ENCODE measurements at regions of chr12 and their contacts with region 1.

Region 1: DNA sequence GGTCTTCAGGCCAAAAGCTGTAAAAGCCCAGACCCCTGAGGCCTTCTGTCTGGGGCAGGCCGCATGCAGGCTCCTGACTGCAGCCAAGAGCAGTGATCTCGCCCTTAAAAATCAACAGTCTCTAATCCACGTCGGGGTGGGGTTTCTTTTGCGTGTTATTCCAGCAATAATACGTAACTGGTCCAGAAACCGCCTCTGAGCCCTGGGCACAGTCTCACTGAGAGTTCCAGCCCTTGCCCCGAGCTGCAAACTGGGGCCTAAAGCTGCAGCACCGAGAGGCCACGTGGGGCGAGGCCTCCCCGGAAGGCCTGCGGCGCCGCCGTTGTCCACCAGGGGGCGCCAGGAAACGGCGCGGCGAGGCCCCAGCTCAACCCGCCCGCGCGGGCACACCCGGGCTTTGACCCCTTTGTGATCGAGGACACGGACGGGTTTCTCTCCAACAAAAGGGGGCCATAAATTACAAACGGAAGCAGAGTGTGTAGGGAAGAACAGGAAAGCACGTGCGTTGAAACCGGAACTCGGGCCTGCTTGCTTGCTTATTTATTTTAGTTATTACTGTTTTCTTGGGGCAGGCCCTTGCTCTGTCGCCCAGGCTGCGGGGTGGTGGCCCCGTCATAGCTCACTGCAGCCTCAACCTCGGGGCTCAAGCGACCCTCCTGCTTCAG is 87.2 kb downstream of the NINJ2 start:
- DNase-seq: peak; percentile 35 to 96 (median 73)

Region 2: GRCh38 chr12:480831-481816 is 95.0 kb before region 1 on chr12:
- intact Hi-C with region 1: no loop called
- DNase-seq: peak in 7 of 10 donors; percentile 19 to 89 (median 46)

Region 3: DNA sequence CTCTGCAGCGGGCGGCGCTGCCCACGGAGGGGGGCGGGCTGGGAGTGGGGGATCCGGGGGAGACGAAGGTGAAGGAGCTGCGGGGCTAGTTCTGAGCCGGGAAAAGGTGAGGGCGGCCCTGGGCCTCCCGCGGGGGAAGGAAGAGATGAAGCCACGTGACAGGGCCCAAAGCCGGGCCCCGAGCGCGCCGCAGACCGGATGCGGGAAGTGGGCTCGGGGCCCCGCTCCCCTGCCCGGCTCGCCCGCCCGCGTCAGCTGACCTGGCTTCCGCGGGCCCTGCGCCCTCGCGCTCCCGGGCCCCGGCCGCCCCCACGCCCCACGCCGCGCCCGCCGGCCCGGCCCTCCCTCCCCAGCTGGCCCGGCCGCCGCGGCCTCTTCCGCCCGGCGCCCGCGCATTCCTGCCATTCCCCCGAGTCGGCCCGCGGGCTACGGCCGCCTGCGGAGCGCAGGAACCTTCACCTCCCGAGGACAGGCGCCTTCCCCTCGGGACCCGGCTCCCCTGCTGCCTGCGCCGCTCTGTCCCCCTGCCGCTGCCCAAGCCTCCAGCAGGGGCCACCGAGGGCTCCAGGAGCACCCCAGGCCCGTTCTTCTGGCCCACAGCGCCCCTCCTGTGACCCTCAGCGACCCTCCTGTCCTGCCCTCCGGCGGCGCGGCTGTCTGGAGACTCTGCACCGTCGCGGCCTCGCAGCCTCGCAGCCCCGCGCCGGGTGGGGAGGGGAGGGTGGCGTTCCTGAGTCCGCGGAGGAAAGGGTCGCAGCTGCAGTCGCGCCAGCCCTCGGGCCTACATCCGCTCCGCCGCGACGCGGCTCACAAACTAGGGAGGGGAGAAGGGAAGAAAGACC is 66.8 kb after region 1 on chr12:
- intact Hi-C with region 1: loop called (anchors 10 kb)
- DNase-seq: peak in 9 of 10 donors; percentile 52 to 94 (median 63)

Region 4: DNA sequence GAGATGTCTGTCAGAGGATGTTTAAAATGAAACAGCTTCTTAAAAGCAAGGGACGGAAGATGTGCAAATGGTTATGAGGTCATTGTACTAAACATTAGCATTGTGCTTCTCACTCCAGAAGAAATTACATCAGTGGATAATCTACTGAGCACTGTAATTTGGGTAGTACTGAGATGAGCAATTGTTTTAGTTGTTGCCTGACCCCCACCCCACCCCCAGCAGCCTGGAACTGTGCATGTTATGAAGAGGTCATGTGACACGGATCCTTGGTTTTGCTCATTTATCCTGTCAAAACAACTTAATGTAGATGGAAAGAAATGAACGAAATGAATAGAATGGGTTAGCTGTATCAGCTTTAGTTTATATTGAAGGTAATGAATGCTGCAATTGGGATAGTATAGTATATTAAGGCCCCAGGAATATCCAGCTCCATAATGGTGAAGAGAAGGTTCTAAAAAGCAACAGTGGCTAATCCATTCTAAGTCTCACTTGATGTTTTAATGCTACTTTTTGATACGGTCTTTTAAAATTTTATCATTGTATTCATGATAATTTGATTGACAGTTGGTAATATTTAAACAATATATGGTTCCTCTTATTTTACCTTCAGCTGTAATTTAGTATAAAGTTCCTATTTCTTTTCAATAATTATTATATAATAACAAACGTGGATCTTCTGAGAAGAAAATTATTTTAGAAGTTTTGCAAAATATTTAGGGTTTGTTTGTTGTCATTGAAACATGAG is 234.8 kb after region 1 on chr12:
- intact Hi-C with region 1: loop called (anchors 2 kb)
- DNase-seq: peak in 1 of 10 donors; percentile 61

Region 5: DNA sequence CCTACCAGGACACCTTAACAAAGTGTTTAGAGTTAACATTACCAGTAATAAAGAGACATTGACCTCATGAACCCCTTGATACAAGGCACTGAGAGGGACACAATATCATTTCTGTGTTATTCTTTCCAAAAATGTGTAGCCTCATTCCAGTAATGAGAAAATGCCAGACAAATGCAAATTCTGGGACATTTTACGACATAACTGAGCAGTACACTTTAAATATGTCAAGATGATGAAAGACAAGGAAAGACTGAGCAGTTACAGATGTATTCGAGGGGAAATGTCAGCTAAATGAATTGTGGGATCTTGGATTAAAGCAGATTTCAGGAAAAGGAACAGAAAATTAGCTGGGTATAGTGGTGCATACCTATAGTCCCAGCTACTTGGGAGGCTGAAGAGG is 670.6 kb after region 1 on chr12:
- intact Hi-C with region 1: no loop called
- DNase-seq: no peak

Measured in posterior cingulate gyrus (tissue), 11 donors.